Endothelial cell of umbilical vein (primary cell): ENCODE measurements at regions of chr5 and their contacts with region 1.

Region 1: DNA sequence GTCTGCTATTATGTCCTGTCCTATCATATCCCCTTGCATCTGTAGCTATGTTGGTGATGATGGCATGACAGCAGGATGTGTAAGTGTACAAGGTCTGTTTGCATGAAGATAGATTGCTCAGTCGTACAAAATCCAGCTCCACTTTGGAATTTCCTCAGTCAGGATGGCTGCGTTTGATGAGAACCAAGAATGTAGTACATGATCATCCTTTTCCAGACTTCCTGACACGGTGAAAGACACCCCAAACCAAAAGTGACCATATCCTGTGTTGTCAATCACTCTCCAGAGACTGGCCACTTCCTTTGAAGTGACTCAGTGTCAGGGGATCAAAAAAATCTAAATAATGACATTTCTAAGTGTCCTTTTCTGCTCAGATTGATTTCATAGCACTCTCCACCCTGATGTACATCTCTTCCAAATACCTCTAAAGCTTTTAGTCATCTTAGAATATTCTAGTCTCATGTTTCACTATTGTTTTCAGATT is 213.4 kb downstream of the PLK2 start:
- DNase-seq: peak; percentile 51
- H3K4me3 ChIP-seq: no peak overlapping the region
- H3K27ac ChIP-seq: peak overlapping the region; percentile 77
- H3K4me1 ChIP-seq: peaks cover 54% of the 10 kb centered on the region
- H3K27me3 ChIP-seq: no peaks in the 10 kb centered on the region
- CTCF ChIP-seq: no peak
- POLR2A ChIP-seq: no peak

Region 2: GRCh38 chr5:58019614-58020013 is 226.9 kb before region 1 on chr5:
- CTCF ChIA-PET with region 1: interaction called, 3 read pairs
- POLR2A ChIA-PET with region 1: no interaction called
- dilution Hi-C with region 1: no loop called
- intact Hi-C with region 1: loop called (anchors 2 kb)
- DNase-seq: peak; percentile 93
- H3K4me3 ChIP-seq: no peak overlapping the region
- H3K27ac ChIP-seq: no peak overlapping the region
- H3K4me1 ChIP-seq: peaks cover 18% of the 10 kb centered on the region
- H3K27me3 ChIP-seq: no peaks in the 10 kb centered on the region
- CTCF ChIP-seq: no peak
- POLR2A ChIP-seq: no peak

Region 3: GRCh38 chr5:58259685-58260152 is 13.2 kb after region 1 on chr5:
- CTCF ChIA-PET with region 1: interaction called, 17 read pairs
- POLR2A ChIA-PET with region 1: interaction called, 3 read pairs
- dilution Hi-C with region 1: no loop called
- intact Hi-C with region 1: loop called (anchors 2 kb)
- DNase-seq: peak; percentile 85
- H3K4me3 ChIP-seq: peak overlapping the region in 1 of 3 experiments; percentile 20
- H3K27ac ChIP-seq: peak overlapping the region; percentile 91
- H3K4me1 ChIP-seq: peaks cover 26% of the 10 kb centered on the region
- H3K27me3 ChIP-seq: no peaks in the 10 kb centered on the region
- CTCF ChIP-seq: no peak
- POLR2A ChIP-seq: peak; percentile 42

Region 4: GRCh38 chr5:58273711-58274110 is 27.2 kb after region 1 on chr5:
- CTCF ChIA-PET with region 1: interaction called, 9 read pairs
- POLR2A ChIA-PET with region 1: interaction called, 6 read pairs
- dilution Hi-C with region 1: no loop called
- intact Hi-C with region 1: loop called (anchors 1 kb)
- DNase-seq: no peak
- H3K4me3 ChIP-seq: no peak overlapping the region
- H3K27ac ChIP-seq: peak overlapping the region; percentile 42
- H3K4me1 ChIP-seq: peaks cover 12% of the 10 kb centered on the region
- H3K27me3 ChIP-seq: no peaks in the 10 kb centered on the region
- CTCF ChIP-seq: no peak
- POLR2A ChIP-seq: no peak

Region 5: DNA sequence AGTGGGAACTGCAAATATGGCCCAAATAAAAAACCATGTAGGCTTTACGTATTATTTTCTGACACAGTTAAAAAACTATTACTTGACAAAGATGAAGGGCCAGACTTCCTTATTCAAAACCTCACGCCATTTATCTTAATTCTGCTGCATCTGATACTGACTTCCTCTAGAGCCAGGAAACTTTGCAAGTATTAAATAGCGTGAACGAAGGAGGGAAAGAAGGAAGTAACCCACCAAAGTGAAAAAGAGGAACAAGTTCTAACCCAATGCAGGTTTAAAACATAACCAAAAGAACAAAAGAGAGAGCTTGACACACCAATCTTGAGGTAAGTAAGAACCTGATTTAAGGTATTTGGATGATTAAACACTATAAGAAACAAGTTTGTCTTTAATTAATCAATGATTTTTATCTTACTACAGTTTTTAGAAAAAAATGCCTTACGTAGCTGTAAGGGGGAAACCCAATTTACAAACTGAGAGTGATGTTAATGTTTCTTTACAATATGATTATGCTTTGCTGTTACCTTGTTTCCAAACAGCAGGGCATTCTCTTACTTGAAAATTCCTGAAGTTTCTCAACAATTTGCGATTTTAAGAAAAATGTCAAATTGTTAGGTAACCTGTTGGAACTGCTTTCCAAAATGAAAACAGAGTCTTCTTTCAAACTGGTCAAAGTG is 244.9 kb after region 1 on chr5 and contains the start of gene GAPT:
- CTCF ChIA-PET with region 1: no interaction called
- POLR2A ChIA-PET with region 1: no interaction called
- dilution Hi-C with region 1: no loop called
- intact Hi-C with region 1: no loop called
- DNase-seq: no peak
- H3K4me3 ChIP-seq: no peak within 1 kb of the TSS
- H3K27ac ChIP-seq: no peak within 1 kb of the TSS
- H3K4me1 ChIP-seq: no peaks in the 10 kb centered on the region
- H3K27me3 ChIP-seq: peaks cover 8% of the 10 kb centered on the region in 2 experiments
- CTCF ChIP-seq: no peak
- POLR2A ChIP-seq: no peak
- total RNA-seq, gene GAPT: not detected in 2 replicates